Ascending aorta (tissue), 2 donors: ENCODE measurements at regions of chr3 and their contacts with region 1.

Region 1: GRCh38 chr3:16064642-16065414 is 109.7 kb upstream of the GALNT15 start:
- DNase-seq: peak; percentile 44 to 86
- H3K4me3 ChIP-seq: no peak overlapping the region
- H3K27ac ChIP-seq: peak overlapping the region; percentile 52
- H3K4me1 ChIP-seq: peaks cover 5 to 43% of the 10 kb centered on the region in 2 donors
- H3K27me3 ChIP-seq: no peaks in the 10 kb centered on the region
- CTCF ChIP-seq: no peak

Region 2: GRCh38 chr3:15964605-15965442 is 100.0 kb before region 1 on chr3:
- intact Hi-C with region 1: no loop called
- DNase-seq: no peak
- H3K4me3 ChIP-seq: no peak overlapping the region
- H3K27ac ChIP-seq: no peak overlapping the region
- H3K4me1 ChIP-seq: no peaks in the 10 kb centered on the region
- H3K27me3 ChIP-seq: no peaks in the 10 kb centered on the region
- CTCF ChIP-seq: no peak

Region 3: GRCh38 chr3:15982667-15983145 is 82.1 kb before region 1 on chr3:
- intact Hi-C with region 1: no loop called
- DNase-seq: no peak
- H3K4me3 ChIP-seq: no peak overlapping the region
- H3K27ac ChIP-seq: no peak overlapping the region
- H3K4me1 ChIP-seq: no peaks in the 10 kb centered on the region
- H3K27me3 ChIP-seq: no peaks in the 10 kb centered on the region
- CTCF ChIP-seq: no peak

Region 4: GRCh38 chr3:16048435-16049318 is 16.2 kb before region 1 on chr3:
- intact Hi-C with region 1: no loop called
- DNase-seq: no peak
- H3K4me3 ChIP-seq: peak overlapping the region in 1 of 2 donors; percentile 46
- H3K27ac ChIP-seq: no peak overlapping the region
- H3K4me1 ChIP-seq: peaks cover 0 to 3% of the 10 kb centered on the region in 2 donors
- H3K27me3 ChIP-seq: no peaks in the 10 kb centered on the region
- CTCF ChIP-seq: peak; percentile 72 to 85 (median 82)

Region 5: GRCh38 chr3:16130066-16130465 is 65.2 kb after region 1 on chr3:
- intact Hi-C with region 1: loop called (anchors 5 kb)
- DNase-seq: no peak
- H3K4me3 ChIP-seq: no peak overlapping the region
- H3K27ac ChIP-seq: peak overlapping the region; percentile 4 to 57
- H3K4me1 ChIP-seq: peaks cover 0 to 16% of the 10 kb centered on the region in 2 donors
- H3K27me3 ChIP-seq: no peaks in the 10 kb centered on the region
- CTCF ChIP-seq: no peak